Heart left ventricle (tissue), 16 donors: ENCODE measurements at regions of chr20 and their contacts with region 1.

Region 1: GRCh38 chr20:1313236-1313964 is 15.5 kb downstream of the SDCBP2 start:
- DNase-seq: peak; percentile 79 to 89 (median 81)
- ATAC-seq: peak; percentile 70 to 95 (median 85)
- H3K4me3 ChIP-seq: peak overlapping the region in 9 of 12 donors; percentile 22 to 50 (median 32)
- H3K27ac ChIP-seq: peak overlapping the region in 6 of 12 donors; percentile 9 to 55 (median 24)
- H3K4me1 ChIP-seq: peaks cover 0 to 15% (median 11%) of the 10 kb centered on the region in 12 donors
- H3K27me3 ChIP-seq: no peaks in the 10 kb centered on the region
- CTCF ChIP-seq: peak; percentile 96 to 100 (median 99)
- POLR2A ChIP-seq: no peak

Region 2: DNA sequence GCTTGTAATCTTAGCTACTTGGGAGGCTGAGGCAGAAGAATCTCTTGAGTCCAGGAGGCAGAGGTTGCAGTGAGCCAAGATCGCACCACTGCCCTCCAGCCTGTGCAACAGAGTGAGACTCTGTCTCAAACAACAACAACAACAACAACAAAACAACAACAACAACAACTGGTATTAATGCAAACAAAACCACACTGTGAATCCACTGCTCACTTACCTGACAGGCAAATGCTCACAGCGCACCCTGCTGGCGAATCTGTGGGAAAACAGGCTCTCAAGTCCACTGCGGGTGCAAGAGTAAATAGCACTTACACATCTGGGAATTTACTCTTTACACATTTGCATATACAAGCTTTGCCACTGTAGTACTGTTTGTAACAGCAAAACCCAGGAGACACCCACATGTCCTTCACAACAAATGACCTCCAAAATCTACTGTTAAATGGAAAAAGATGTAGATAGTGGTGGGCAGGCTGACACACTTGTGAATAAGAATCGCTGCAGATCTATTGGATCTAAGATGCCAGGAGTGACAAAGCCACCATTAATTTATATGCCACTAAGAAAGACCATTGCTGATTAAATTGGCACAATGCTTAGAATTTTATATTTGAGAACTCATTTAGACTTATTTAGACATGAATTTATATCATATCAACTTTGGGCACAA is 124.0 kb after region 1 on chr20:
- intact Hi-C with region 1: loop called (anchors 1 to 2 kb)
- DNase-seq: peak; percentile 68 to 84 (median 73)
- ATAC-seq: peak in 3 of 4 donors; percentile 70 to 78 (median 76)
- H3K4me3 ChIP-seq: no peak overlapping the region
- H3K27ac ChIP-seq: no peak overlapping the region
- H3K4me1 ChIP-seq: peaks cover 0 to 16% (median 0%) of the 10 kb centered on the region in 12 donors
- H3K27me3 ChIP-seq: no peaks in the 10 kb centered on the region
- CTCF ChIP-seq: peak; percentile 73 to 91 (median 84)
- POLR2A ChIP-seq: no peak